Head of caudate nucleus (tissue), 42 donors: ENCODE measurements at regions of chr4 and their contacts with region 1.

Region 1: DNA sequence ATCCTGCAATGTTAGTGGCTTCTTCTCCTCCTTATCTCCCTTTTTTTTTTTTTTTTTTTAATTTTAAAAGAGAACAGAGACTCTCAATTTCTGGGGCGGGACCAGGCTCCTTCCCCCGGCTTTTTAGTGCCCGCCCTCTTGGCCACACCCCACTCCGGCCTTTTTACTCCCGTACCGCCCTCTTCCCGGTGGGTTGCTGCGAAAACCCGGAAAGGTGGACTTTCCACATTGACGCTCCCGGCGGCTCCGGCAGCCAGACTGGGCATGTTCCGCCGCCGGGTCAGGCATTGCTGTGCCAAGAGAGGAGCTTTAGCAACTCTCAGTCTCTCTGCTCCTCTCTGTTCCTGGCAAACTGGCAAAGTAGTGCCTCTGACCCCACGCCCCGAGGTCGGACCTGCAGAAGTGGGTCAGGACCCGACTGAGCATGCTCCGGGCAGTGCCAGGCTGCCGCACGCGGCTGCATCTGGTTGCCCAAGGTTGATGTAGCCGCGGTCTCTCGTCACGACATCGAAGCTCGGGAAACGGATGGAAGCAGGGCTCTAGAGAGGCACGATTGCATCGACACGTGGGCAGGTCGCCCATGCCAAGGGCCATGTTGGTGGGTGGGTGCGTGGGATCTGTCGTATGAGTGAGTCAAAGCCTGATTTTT is 1.1 kb upstream of the MFAP3L start:
- DNase-seq: peak; percentile 86 to 99 (median 95)

Region 2: DNA sequence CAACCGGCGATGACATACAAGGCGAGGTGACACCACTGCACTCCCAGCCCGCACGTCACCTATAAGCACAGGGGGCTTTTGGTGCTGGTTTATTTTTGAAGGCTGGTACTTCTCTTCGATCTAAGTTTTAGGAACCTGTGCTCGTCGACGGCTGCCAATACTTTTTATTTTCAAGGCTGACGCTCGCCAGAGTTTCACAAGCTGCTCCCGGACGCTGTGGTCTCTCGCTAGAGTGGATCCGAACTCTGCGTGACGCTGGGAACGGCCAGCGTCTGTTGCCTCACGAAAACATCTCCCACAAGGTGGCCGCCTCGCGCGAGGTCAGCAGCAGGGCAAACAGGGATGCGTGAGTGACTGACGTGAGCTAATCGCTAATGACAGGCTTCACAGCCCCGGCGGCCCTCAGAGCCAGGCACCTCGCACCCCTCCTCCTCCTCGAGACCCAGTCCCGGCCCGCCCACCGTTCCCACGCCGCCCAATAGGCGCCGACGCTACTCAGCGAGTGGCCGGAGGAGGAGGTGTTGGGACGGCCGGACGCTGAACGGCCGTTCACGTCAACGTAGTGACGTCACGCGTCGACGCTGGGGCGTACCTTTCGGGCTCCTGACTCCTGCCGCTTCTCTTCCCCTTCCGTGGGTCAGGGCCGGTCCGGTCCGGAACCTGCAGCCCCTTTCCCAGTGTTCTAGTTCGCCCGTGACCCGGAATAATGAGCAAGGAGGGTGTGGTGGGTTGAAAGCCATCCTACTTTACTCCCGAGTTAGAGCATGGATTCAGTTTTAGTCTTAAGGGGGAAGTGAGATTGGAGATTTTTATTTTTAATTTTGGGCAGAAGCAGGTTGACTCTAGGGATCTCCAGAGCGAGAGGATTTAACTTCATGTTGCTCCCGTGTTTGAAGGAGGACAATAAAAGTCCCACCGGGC is 407.1 kb before region 1 on chr4 and contains the start of gene CLCN3:
- intact Hi-C with region 1: loop called (anchors 10 kb)
- DNase-seq: peak; percentile 92 to 99 (median 97)

Region 3: DNA sequence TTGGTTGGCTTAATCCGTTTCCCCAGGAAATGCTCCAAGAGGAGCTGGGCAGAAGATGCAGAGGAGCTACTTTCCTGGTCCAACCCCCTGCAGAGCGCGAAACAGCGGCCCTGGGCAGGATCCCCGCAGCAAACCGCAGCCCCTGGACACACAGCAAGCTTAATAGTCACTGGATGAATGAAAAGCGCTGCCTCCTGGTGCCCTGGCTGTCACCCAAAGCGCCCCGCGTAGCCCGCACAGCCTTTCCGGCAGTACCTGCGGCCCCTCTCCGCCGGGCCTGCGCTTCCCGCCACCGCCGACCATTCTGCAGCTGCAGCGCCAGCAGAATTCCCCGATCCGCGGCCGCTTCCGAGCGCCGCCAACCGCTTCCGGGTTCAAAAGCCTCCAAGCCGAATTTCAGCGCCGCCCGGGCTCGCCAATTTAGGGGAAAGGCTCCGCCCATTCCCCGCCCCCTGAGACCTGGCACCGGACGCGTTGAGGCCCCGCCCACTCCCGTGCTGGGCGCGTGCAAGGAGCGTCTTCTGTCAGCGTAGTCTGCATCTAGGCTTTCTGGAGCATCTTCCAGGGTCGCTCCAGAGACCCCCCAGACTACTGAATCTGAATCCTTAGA is 269.6 kb before region 1 on chr4 and contains the start of gene HPF1:
- intact Hi-C with region 1: loop called (anchors 5 kb)
- DNase-seq: peak; percentile 85 to 97 (median 94)

Region 4: DNA sequence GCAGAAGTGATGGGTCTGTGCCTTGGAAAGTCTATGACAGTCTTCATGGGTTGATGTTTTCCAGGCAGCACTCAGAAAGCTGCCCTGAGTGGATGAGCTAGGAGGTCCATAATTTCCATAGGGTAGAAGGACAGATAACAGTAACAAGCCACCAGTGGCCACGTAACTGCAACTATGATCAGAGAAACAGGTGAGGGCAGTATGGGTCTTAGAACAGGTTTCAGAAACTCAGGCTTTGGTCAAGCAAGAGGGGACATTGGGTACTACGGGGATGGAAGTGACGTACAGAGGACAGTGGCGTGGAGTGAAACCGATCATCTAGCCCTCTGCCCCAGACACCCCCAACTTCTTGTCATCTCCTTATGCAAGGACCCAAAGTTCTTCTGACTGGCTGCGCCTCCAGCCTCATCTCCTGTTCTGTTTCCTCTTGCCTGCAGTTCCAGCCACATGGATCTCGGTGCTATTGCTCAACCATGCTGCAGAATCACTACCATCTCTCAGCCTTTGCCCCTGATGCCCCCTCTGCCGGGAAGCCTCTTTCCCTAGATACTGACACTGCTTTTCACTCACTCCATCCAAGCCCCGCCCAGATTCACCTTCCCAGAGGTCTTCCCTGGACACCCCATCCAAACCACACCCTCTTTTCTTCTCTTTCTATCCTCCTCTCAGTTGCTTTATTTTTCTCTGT is 124.5 kb before region 1 on chr4:
- intact Hi-C with region 1: loop called (anchors 5 kb)
- DNase-seq: peak in 11 of 42 donors; percentile 11 to 64 (median 23)

Region 5: GRCh38 chr4:169988252-169988651 is 39.1 kb before region 1 on chr4:
- intact Hi-C with region 1: loop called (anchors 5 kb)
- DNase-seq: no peak